ENCODE measurements at regions of chr11 and their contacts with region 1.

Region 1: DNA sequence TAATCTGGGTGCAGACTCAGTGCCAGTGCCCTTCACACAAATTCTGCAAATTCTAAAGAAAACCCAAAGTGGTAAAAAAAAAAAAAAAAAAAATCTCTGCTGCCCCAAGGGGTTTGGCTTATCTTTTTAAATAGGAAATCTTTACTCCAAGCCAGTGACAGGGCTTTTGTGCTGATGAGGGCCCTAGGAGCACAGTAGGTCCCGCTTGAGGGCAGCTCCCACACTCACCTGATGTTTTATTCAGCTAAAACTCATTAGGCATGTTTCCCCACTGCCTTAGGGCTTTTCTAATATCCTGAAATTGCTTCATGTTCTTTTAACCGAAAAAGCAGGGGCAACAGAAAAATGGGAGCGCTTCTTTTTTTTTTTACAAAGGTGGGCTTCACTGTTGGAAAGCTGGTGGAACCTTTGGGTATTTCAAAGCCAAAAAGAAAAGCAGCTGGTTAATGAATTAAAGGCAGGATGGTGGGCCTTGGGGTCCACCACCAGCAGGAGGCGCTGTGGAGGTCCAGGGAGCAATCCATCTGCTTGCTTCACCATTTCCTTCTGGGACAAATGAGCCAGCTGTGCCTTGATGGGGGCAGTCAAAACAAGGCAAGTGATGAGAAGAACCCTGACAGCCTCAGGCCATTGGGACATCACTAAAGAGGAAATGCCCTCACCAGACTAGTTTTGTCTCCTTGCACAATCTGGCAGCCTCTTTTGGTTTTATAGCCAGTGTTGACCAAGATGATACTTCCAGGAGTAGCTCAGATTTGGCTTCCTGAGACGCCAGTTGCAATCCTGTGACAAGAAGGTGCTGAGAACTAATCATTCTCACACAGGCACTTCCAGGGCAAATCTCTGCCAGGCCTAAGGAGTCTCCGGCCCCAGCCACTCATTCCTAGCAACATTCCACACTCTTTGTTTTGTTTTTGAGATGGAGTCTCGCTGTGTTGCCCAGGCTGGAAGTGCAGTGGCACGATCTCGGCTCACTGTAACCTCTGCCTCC is 38.4 kb upstream of the WEE1 start:
- DNase-seq: peak; percentile 58 to 83 (median 68)
- H3K4me3 ChIP-seq: no peak overlapping the region
- H3K4me3 Mint-ChIP-seq: no peak overlapping the region
- H3K27ac ChIP-seq: no peak overlapping the region
- H3K27ac Mint-ChIP-seq: peak overlapping the region in 2 of 8 donors; percentile 60 to 86
- H3K4me1 ChIP-seq: no peaks in the 10 kb centered on the region
- H3K4me1 Mint-ChIP-seq: no peaks in the 10 kb centered on the region
- H3K27me3 ChIP-seq: no peaks in the 10 kb centered on the region
- H3K27me3 Mint-ChIP-seq: no peaks in the 10 kb centered on the region

Region 2: DNA sequence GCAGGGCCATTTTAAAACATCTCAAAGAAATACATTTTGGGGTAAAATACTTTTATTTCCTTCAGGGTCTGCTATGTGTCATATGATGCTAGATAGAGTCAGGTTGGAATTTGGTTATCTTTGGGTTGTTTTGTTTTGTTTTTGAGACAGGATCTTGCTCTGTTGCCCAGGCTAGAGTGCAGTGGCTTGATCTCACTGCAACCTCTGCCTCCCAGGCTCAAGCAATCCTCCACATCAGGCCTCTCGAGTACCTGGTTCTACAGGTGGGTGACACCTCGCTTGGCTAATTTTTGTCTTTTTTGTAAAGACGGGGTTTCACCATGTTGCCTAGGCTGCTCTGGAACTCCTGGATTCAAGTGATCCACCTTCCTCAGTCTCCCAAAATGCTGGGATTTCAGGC is 287.2 kb before region 1 on chr11:
- CTCF ChIA-PET with region 1: no interaction called
- POLR2A ChIA-PET with region 1: no interaction called
- DNase-seq: no peak
- H3K4me3 ChIP-seq: no peak overlapping the region
- H3K4me3 Mint-ChIP-seq: no peak overlapping the region
- H3K27ac ChIP-seq: no peak overlapping the region
- H3K27ac Mint-ChIP-seq: peak overlapping the region in 2 of 8 donors; percentile 6 to 63
- H3K4me1 ChIP-seq: peaks cover 54% of the 10 kb centered on the region
- H3K4me1 Mint-ChIP-seq: peaks cover 23 to 62% (median 54%) of the 10 kb centered on the region in 3 donors
- H3K27me3 ChIP-seq: no peaks in the 10 kb centered on the region
- H3K27me3 Mint-ChIP-seq: no peaks in the 10 kb centered on the region

Region 3: GRCh38 chr11:9489080-9489765 is 45.9 kb before region 1 on chr11:
- CTCF ChIA-PET with region 1: no interaction called
- POLR2A ChIA-PET with region 1: no interaction called
- DNase-seq: no peak
- H3K4me3 ChIP-seq: no peak overlapping the region
- H3K4me3 Mint-ChIP-seq: no peak overlapping the region
- H3K27ac ChIP-seq: no peak overlapping the region
- H3K27ac Mint-ChIP-seq: peak overlapping the region in 5 of 8 donors; percentile 19 to 75 (median 55)
- H3K4me1 ChIP-seq: no peaks in the 10 kb centered on the region
- H3K4me1 Mint-ChIP-seq: peaks cover 0 to 9% (median 2%) of the 10 kb centered on the region in 3 donors
- H3K27me3 ChIP-seq: no peaks in the 10 kb centered on the region
- H3K27me3 Mint-ChIP-seq: no peaks in the 10 kb centered on the region

Region 4: GRCh38 chr11:9573052-9573774 is 38.1 kb after region 1 on chr11 and contains the start of gene WEE1:
- CTCF ChIA-PET with region 1: interaction called, 11 read pairs
- POLR2A ChIA-PET with region 1: interaction called, 5 read pairs
- DNase-seq: peak; percentile 89 to 97 (median 94)
- H3K4me3 ChIP-seq: peak within 1 kb of the TSS; percentile 76
- H3K4me3 Mint-ChIP-seq: peak within 1 kb of the TSS; percentile 84 to 96 (median 86)
- H3K27ac ChIP-seq: peak within 1 kb of the TSS; percentile 82
- H3K27ac Mint-ChIP-seq: peak within 1 kb of the TSS; percentile 3 to 97 (median 89)
- H3K4me1 ChIP-seq: peaks cover 5% of the 10 kb centered on the region
- H3K4me1 Mint-ChIP-seq: peaks cover 32 to 45% (median 43%) of the 10 kb centered on the region in 3 donors
- H3K27me3 ChIP-seq: no peaks in the 10 kb centered on the region
- H3K27me3 Mint-ChIP-seq: no peaks in the 10 kb centered on the region
- total RNA-seq, gene WEE1: 46.9 to 49.8 TPM

Region 5: DNA sequence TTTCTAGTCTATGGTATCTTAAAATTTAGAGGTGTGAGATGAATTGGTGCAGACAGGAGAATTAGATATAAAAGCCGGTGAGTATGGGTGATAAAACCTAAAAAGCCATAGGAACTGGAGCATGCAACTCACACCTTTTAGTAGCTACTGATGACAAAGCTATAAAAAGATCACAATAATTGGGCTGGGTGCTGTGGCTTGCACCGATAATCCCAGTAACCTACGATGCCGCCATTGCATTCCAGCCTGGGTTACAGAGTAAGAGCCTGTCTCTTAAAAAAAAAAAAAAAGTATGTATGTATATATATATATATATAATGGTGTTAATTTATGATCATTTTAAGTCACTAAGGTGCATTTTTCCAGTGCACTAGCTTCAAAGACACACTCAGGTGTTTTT is 55.6 kb after region 1 on chr11:
- CTCF ChIA-PET with region 1: interaction called, 10 read pairs
- POLR2A ChIA-PET with region 1: no interaction called
- DNase-seq: no peak
- H3K4me3 ChIP-seq: no peak overlapping the region
- H3K4me3 Mint-ChIP-seq: no peak overlapping the region
- H3K27ac ChIP-seq: no peak overlapping the region
- H3K27ac Mint-ChIP-seq: no peak overlapping the region
- H3K4me1 ChIP-seq: no peaks in the 10 kb centered on the region
- H3K4me1 Mint-ChIP-seq: no peaks in the 10 kb centered on the region
- H3K27me3 ChIP-seq: no peaks in the 10 kb centered on the region
- H3K27me3 Mint-ChIP-seq: no peaks in the 10 kb centered on the region

Region 6: DNA sequence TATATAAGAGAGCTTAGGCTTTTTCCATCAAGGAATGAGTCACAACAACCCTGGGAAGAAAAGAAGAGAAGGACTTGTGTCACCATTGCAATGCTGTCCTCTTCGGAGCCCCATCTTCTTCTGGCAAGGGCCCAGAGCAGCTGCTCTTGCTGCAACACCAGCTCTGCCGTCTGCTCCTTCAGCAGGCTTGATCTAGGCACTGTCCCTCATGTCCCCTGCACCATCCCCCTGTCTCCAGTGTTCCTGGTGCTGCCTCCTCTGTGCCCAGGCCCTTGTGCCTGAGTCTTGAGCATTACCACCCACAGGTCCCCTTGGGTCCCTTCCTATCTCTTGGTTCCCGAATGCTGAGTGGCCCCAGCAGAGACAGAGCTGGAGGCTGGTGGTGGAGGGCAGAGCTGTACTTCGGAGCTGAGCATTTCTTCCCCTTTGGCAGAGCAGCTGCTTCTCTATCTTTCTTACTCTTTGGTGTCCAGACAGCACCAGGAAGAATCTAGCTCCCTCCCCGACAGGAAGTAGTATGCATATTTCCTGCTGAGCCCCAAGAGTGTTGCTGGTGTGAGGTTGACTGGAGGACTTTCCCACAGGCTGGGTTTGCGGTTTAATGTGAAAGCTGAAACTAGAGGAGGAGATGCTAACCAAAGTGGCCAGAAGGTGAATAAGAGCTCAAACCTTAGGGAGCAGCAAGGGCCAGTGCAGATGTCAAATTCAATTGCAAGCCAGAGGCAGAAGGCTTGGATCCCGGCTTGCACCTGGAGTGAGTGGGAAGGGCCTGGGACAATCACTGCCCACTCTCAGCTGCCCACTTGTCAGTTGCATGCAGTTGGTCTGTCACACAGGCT is 66.2 kb after region 1 on chr11:
- CTCF ChIA-PET with region 1: interaction called, 17 read pairs
- POLR2A ChIA-PET with region 1: interaction called, 10 read pairs
- DNase-seq: peak; percentile 19 to 66 (median 52)
- H3K4me3 ChIP-seq: peak overlapping the region; percentile 47
- H3K4me3 Mint-ChIP-seq: peak overlapping the region; percentile 4 to 93 (median 77)
- H3K27ac ChIP-seq: no peak overlapping the region
- H3K27ac Mint-ChIP-seq: peak overlapping the region; percentile 31 to 99 (median 90)
- H3K4me1 ChIP-seq: peaks cover 20% of the 10 kb centered on the region
- H3K4me1 Mint-ChIP-seq: peaks cover 22 to 24% (median 24%) of the 10 kb centered on the region in 3 donors
- H3K27me3 ChIP-seq: no peaks in the 10 kb centered on the region
- H3K27me3 Mint-ChIP-seq: no peaks in the 10 kb centered on the region

Region 7: GRCh38 chr11:9748361-9748970 is 213.4 kb after region 1 on chr11:
- CTCF ChIA-PET with region 1: interaction called, 34 read pairs
- POLR2A ChIA-PET with region 1: no interaction called
- DNase-seq: peak; percentile 16 to 66 (median 50)
- H3K4me3 ChIP-seq: no peak overlapping the region
- H3K4me3 Mint-ChIP-seq: no peak overlapping the region
- H3K27ac ChIP-seq: no peak overlapping the region
- H3K27ac Mint-ChIP-seq: no peak overlapping the region
- H3K4me1 ChIP-seq: no peaks in the 10 kb centered on the region
- H3K4me1 Mint-ChIP-seq: peaks cover 3 to 7% (median 5%) of the 10 kb centered on the region in 3 donors
- H3K27me3 ChIP-seq: no peaks in the 10 kb centered on the region
- H3K27me3 Mint-ChIP-seq: no peaks in the 10 kb centered on the region

Measured in CD8-positive, alpha-beta memory T cell (primary cell).